WTC11 (cell line): ENCODE measurements at regions of chr18 and their contacts with region 1.

Region 1: GRCh38 chr18:45664824-45665763 is 49.8 kb downstream of the SLC14A2 start:
- DNase-seq: peak; percentile 70
- ATAC-seq: peak; percentile 75
- H3K4me3 Mint-ChIP-seq: no peak overlapping the region
- H3K27ac Mint-ChIP-seq: no peak overlapping the region
- H3K4me1 Mint-ChIP-seq: peaks cover 32% of the 10 kb centered on the region
- H3K27me3 Mint-ChIP-seq: 0 out of 2 replicates have a peak, but pooled peaks cover 2% of the 10 kb centered on the region
- CTCF ChIP-seq: peak; percentile 84

Region 2: DNA sequence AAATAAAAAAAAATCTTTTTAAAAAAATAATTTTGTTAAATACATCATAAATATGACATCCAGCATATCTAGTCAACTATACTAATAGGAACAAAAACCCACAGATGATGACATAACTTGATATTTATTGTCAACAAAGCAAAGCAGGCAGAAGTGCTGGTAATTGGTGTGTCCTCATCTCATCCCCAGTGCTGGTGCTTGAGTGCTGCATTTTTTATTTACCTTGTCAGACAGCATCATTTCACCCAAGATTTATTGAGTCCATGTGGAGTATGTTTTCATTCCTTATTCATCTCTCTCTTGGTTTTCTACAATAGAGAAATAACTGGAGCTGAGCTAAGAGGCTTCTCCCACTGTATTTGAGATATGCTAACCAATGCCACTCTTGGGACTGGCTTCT is 241.4 kb before region 1 on chr18:
- CTCF ChIA-PET with region 1: no interaction called
- POLR2A ChIA-PET with region 1: no interaction called
- DNase-seq: no peak
- ATAC-seq: no peak
- H3K4me3 Mint-ChIP-seq: no peak overlapping the region
- H3K27ac Mint-ChIP-seq: no peak overlapping the region
- H3K4me1 Mint-ChIP-seq: peaks cover 6% of the 10 kb centered on the region
- H3K27me3 Mint-ChIP-seq: no peaks in the 10 kb centered on the region
- CTCF ChIP-seq: no peak

Region 3: GRCh38 chr18:45621061-45621511 is 44.0 kb before region 1 on chr18:
- CTCF ChIA-PET with region 1: interaction called, 18 read pairs
- POLR2A ChIA-PET with region 1: no interaction called
- DNase-seq: peak; percentile 47
- ATAC-seq: peak; percentile 77
- H3K4me3 Mint-ChIP-seq: no peak overlapping the region
- H3K27ac Mint-ChIP-seq: no peak overlapping the region
- H3K4me1 Mint-ChIP-seq: peaks cover 6% of the 10 kb centered on the region
- H3K27me3 Mint-ChIP-seq: no peaks in the 10 kb centered on the region; the same call in 1 of the 2 replicates
- CTCF ChIP-seq: peak; percentile 85

Region 4: DNA sequence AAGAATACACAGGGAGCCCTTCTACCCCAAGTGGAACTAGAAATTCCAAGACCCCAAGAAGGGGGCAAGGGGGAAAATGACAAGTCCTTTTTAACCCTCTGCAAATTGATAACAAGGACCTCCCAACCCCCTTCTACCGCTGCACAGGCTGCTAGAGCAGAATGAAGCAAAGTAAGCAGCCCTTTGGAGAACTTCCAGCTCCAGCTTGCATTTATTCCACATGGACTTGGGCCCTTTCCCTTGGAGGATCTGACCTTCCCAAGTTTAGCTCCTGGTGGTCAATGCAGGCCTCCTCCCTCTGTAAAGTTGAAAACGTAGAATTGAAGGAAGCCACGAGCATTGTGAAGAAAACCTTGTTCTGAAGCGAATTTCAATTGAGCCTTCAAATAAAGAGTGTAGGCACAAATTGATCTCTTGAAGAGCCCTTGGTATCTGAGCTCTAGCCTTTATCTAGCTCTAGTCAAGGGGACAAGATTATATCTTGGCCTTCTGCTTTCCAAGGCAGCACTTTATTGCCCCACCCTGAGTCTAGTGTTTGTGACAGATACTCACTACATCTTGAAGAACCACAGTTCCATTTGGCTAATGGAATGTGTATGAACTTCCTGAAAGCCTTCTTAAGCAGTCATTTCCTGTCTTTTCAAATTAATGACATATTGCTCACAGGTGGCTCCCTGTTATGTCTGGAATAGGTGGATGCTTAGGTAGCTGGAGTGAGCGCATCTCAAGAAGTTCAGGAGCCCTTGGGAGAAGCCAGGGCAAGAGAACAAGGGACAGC is 12.6 kb before region 1 on chr18:
- CTCF ChIA-PET with region 1: interaction called, 10 read pairs
- POLR2A ChIA-PET with region 1: no interaction called
- DNase-seq: no peak
- ATAC-seq: peak; percentile 40
- H3K4me3 Mint-ChIP-seq: no peak overlapping the region
- H3K27ac Mint-ChIP-seq: no peak overlapping the region
- H3K4me1 Mint-ChIP-seq: peaks cover 19% of the 10 kb centered on the region
- H3K27me3 Mint-ChIP-seq: peaks cover 30% of the 10 kb centered on the region
- CTCF ChIP-seq: no peak

Region 5: GRCh38 chr18:45715341-45715740 is 50.2 kb after region 1 on chr18:
- CTCF ChIA-PET with region 1: no interaction called
- POLR2A ChIA-PET with region 1: no interaction called
- DNase-seq: no peak
- ATAC-seq: no peak
- H3K4me3 Mint-ChIP-seq: no peak overlapping the region
- H3K27ac Mint-ChIP-seq: no peak overlapping the region
- H3K4me1 Mint-ChIP-seq: no peaks in the 10 kb centered on the region
- H3K27me3 Mint-ChIP-seq: peaks cover 3% of the 10 kb centered on the region; the same call in 1 of the 2 replicates
- CTCF ChIP-seq: no peak

Region 6: GRCh38 chr18:45839414-45840395 is 174.6 kb after region 1 on chr18:
- CTCF ChIA-PET with region 1: interaction called, 36 read pairs
- POLR2A ChIA-PET with region 1: no interaction called
- DNase-seq: peak; percentile 56
- ATAC-seq: peak; percentile 65
- H3K4me3 Mint-ChIP-seq: no peak overlapping the region
- H3K27ac Mint-ChIP-seq: no peak overlapping the region
- H3K4me1 Mint-ChIP-seq: peaks cover 22% of the 10 kb centered on the region
- H3K27me3 Mint-ChIP-seq: peaks cover 44% of the 10 kb centered on the region
- CTCF ChIP-seq: peak; percentile 40; the same call in 1 of the 2 replicates

Region 7: GRCh38 chr18:45910405-45911023 is 245.4 kb after region 1 on chr18:
- CTCF ChIA-PET with region 1: interaction called, 16 read pairs
- POLR2A ChIA-PET with region 1: no interaction called
- DNase-seq: peak; percentile 80
- ATAC-seq: peak; percentile 96
- H3K4me3 Mint-ChIP-seq: no peak overlapping the region
- H3K27ac Mint-ChIP-seq: no peak overlapping the region
- H3K4me1 Mint-ChIP-seq: no peaks in the 10 kb centered on the region
- H3K27me3 Mint-ChIP-seq: no peaks in the 10 kb centered on the region
- CTCF ChIP-seq: peak; percentile 65

Region 8: DNA sequence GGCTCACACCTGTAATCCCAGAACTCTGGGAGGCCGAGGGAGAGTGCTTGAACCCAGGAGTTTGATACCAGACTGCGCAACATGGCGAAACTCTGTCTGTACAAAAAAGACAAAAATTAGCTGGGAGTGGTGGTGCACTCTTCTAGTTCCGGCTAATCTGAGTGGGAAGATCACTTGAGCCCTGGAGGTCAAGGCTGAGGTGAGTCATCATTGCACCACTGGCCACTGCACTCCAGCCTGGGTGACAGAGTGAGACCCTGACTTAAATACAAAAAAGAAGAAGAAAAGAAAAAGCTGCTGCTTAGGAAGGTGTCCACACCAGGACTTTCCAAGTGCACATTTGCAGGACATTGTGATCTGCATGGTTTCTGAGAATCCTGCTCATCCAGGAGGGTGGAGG is 1570.0 kb after region 1 on chr18:
- CTCF ChIA-PET with region 1: no interaction called
- POLR2A ChIA-PET with region 1: no interaction called
- DNase-seq: no peak
- ATAC-seq: no peak
- H3K4me3 Mint-ChIP-seq: no peak overlapping the region
- H3K27ac Mint-ChIP-seq: no peak overlapping the region
- H3K4me1 Mint-ChIP-seq: peaks cover 13% of the 10 kb centered on the region
- H3K27me3 Mint-ChIP-seq: no peaks in the 10 kb centered on the region
- CTCF ChIP-seq: no peak